Calu3 (cell line): ENCODE measurements at regions of chr7 and their contacts with region 1.

Region 1: GRCh38 chr7:22726345-22727185 is 435 bp upstream of the IL6 start:
- DNase-seq: peak; percentile 81
- H3K4me3 Mint-ChIP-seq: peak overlapping the region; percentile 73
- H3K27ac Mint-ChIP-seq: peak overlapping the region; percentile 86
- H3K4me1 Mint-ChIP-seq: peaks cover 63% of the 10 kb centered on the region
- H3K27me3 Mint-ChIP-seq: no peaks in the 10 kb centered on the region
- CTCF ChIP-seq: peak; percentile 80

Region 2: DNA sequence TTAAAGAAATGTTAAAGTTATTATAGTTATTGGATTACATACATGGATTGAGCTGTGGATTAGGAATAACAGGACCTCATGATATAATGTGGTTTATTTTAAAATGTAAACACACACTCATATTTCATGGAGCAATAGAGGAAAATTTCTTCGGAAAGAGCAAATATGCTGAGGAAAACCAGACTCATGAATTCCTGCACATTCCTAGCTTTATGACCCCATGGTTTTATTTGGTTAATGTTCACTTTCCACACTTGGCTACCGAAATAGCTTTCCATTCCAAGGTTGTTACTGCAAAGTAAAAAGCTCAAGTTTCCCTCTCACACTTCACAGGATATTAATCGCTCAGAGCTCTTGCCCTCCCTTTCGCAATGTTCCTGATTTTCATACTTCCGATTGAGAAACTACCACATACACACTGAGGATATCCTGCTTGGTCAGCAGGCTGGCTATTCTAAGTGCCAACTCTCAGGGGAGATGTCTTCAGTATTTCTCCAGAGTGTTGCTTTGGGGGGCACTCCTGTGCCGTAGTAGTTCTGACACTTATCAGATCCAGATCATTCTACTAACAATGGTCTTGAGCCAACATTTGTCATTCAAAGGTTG is 149.1 kb before region 1 on chr7:
- CTCF ChIA-PET with region 1: interaction called, 44 read pairs
- intact Hi-C with region 1: no loop called
- DNase-seq: peak; percentile 71
- H3K4me3 Mint-ChIP-seq: peak overlapping the region; percentile 59
- H3K27ac Mint-ChIP-seq: peak overlapping the region; percentile 96
- H3K4me1 Mint-ChIP-seq: peaks cover 75% of the 10 kb centered on the region
- H3K27me3 Mint-ChIP-seq: no peaks in the 10 kb centered on the region
- CTCF ChIP-seq: no peak

Region 3: DNA sequence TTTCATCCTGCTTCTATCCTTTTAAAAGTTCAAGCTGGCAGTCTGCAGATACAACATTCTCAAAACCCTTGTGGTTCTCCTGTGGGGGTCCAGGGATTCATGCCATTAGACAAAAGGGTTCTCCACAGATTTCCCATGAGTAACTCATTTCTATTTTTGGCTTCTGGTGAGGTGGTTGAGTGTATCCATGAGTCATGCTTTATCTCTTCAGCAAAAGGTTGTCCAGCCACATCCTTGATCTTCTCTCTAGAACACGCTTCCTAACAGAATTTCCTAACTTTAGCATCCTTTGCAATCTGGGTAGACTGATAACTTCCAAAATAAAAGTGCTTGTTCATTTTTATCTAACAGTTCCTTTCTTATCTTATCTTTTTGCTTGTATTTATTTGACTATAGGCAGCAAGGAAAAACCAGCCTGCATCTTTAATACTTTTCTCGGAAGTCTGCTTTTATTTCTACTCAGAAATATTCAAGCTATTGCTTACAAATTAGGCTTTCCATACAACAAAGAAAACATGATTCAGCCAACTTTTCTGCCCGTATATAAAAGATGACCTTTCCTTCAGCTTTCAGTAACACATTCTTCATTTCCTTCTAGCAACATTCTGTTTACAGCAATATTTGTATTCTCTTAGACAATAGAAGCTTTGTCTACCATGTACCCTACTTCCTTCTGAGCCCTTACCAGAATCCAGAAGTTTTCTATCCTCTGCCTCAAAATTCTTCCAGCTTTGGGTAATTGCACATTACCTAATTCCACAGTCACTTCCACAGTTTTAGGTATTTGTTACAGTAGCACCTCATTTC is 78.9 kb before region 1 on chr7:
- CTCF ChIA-PET with region 1: interaction called, 7 read pairs
- intact Hi-C with region 1: loop called (anchors 2 kb)
- DNase-seq: no peak
- H3K4me3 Mint-ChIP-seq: peak overlapping the region; percentile 4
- H3K27ac Mint-ChIP-seq: peak overlapping the region; percentile 71
- H3K4me1 Mint-ChIP-seq: peaks cover 39% of the 10 kb centered on the region
- H3K27me3 Mint-ChIP-seq: no peaks in the 10 kb centered on the region
- CTCF ChIP-seq: no peak

Region 4: DNA sequence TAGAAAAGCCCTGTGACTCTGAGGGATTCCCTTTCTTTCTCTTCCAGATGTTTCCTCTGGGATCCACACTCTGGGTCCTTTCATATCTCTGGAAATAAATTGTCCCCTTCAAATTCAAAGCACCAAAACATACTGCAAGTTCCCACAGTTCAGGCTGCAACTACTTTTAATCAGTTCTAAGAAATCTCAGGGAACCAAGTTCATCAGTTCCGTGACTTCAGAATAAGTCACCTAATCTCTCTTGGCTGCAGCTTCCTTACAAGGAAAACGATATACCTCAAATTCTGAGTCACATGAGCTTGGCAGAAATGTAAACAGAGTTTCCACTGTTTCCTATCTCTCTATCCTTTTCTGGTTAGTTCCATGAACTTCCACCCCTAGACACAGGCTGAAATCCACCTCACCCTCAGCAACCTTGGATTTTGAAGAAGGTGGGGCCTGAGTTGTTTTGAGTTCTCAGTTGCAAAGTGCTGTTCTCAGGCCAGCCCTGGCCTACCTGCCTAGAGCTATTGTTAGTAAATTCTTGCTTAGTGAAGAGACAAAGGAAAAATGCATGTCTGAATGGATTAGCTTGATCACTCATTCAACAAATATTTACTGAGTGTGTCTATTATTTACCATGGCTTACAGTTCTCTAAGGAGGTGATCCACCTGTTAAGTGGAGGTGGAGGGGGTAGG is 58.9 kb before region 1 on chr7:
- CTCF ChIA-PET with region 1: interaction called, 6 read pairs
- intact Hi-C with region 1: loop called (anchors 2 kb)
- DNase-seq: peak; percentile 74
- H3K4me3 Mint-ChIP-seq: peak overlapping the region; percentile 1
- H3K27ac Mint-ChIP-seq: peak overlapping the region; percentile 83
- H3K4me1 Mint-ChIP-seq: peaks cover 69% of the 10 kb centered on the region
- H3K27me3 Mint-ChIP-seq: no peaks in the 10 kb centered on the region
- CTCF ChIP-seq: no peak

Region 5: DNA sequence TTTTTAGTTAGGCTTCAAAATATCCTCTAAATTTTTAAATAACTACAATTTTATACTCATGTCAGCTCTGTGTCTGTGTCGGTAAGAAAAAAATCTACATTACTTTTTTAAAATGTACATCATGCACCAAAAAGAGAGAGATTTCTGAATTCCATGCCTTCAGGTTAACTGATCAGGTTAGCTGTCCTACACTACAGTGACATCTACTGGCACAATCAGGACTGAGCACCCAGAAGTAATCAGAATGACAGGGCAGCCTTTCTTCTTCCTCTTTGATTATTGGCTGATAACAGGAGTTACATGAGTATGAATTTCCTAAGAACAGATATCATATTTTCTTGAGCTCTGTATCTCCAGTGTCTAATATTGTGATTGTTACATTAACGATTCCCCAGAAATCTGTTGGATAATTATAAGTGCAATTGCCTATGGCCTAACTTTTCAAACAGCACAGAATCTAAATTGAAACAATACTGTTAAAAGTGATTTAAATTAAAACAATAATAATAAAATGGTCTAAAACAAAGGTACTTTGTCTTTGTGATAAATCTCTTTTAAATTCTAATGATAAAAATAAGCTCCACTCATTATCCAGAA is 329.1 kb after region 1 on chr7:
- CTCF ChIA-PET with region 1: interaction called, 12 read pairs
- intact Hi-C with region 1: no loop called
- DNase-seq: peak; percentile 73
- H3K4me3 Mint-ChIP-seq: no peak overlapping the region
- H3K27ac Mint-ChIP-seq: no peak overlapping the region
- H3K4me1 Mint-ChIP-seq: no peaks in the 10 kb centered on the region
- H3K27me3 Mint-ChIP-seq: peaks cover 20% of the 10 kb centered on the region
- CTCF ChIP-seq: peak; percentile 88